HAP-1 (cell line): ENCODE measurements at regions of chr14 and their contacts with region 1.

Region 1: DNA sequence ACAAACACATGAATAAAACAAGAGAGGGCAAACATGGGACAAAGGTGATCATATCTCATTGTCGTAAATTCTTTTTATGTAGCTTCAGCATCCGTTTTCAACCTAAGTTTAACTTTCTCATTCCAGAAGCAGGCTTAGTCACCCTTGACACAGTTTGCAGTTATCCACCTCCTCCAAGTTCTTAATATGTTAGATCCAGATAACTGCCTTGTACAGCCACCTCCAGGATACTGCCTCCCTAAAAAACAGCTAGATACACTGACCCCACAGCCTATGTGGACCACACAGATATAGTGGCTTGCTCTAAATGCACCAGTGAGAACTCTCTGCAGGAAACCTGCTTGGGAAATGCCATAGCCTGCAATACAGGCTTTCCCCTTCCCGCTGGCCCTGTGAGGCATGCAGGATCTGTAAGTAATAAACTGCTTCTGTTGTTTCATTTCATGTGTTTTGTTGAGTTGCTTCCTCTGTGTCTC is 11.1 kb upstream of the RTL1 start:
- DNase-seq: no peak
- H3K4me3 ChIP-seq: no peak overlapping the region
- H3K4me1 ChIP-seq: no peaks in the 10 kb centered on the region
- H3K27me3 ChIP-seq: 0 out of 2 replicates have a peak, but pooled peaks cover 2% of the 10 kb centered on the region

Region 2: DNA sequence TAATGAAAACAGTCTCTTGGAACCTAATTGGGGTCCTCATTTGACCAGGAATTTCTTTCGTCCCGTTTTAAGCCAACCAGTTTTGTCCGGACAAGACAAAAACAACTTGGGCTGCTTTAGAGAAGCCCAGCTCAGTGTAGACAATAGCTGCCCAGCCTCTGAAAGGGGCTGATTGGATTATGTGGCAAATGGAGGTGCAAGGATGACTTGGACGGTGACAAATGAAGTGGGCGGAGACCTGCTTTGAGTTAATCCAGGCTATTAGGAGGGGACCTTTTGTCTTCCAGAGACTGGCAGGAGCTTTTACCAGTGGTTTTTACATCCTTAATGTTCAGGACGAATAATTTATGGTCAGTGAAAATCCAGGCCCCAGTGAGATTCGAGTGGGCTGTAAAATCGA is 83.9 kb before region 1 on chr14:
- in situ Hi-C with region 1: no loop called
- DNase-seq: peak; percentile 94 to 100
- H3K4me3 ChIP-seq: no peak overlapping the region
- H3K4me1 ChIP-seq: peaks cover 40% of the 10 kb centered on the region
- H3K27me3 ChIP-seq: no peaks in the 10 kb centered on the region

Region 3: DNA sequence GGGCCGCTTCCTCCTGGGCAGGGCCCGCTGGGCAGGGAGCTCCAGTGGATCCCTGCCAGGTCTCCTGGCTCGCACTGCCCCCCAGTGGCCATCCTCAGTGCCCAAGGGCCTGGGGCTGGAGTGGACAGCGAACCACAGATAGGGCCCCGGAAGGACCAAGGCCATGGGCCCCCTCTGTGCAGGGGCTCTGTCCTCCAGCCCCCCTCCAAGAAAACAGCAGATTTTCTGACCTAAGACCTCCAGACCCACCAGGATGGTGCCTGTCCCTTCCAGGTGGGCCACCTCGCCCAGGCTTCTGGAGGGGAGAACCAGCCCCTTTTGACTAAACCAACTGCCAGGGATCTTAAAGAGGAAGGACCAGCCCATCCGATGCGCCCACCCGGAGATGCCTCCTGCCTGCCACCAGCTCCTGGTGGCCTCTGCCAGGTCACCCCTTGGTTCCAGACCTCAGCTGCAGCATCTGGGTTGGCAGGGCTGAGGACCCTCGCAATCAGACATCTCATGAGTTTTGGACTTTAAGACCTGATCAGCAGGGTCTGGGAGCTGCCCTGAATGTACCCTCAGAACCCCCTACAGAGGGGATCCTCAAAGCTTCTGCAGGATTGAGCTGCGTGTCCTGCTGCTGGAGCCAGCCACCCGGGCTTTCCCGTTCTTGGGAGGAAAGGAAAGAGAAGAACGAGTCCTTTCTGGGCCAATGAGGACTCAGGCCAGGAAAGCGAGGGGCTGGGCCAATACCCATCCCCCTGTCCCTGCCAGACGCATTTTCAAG is 320.9 kb after region 1 on chr14:
- in situ Hi-C with region 1: loop called (anchors 10 kb)
- DNase-seq: peak; percentile 41 to 87
- H3K4me3 ChIP-seq: no peak overlapping the region
- H3K4me1 ChIP-seq: no peaks in the 10 kb centered on the region
- H3K27me3 ChIP-seq: no peaks in the 10 kb centered on the region